AG04450 (cell line): ENCODE measurements at regions of chr10 and their contacts with region 1.

Region 1: DNA sequence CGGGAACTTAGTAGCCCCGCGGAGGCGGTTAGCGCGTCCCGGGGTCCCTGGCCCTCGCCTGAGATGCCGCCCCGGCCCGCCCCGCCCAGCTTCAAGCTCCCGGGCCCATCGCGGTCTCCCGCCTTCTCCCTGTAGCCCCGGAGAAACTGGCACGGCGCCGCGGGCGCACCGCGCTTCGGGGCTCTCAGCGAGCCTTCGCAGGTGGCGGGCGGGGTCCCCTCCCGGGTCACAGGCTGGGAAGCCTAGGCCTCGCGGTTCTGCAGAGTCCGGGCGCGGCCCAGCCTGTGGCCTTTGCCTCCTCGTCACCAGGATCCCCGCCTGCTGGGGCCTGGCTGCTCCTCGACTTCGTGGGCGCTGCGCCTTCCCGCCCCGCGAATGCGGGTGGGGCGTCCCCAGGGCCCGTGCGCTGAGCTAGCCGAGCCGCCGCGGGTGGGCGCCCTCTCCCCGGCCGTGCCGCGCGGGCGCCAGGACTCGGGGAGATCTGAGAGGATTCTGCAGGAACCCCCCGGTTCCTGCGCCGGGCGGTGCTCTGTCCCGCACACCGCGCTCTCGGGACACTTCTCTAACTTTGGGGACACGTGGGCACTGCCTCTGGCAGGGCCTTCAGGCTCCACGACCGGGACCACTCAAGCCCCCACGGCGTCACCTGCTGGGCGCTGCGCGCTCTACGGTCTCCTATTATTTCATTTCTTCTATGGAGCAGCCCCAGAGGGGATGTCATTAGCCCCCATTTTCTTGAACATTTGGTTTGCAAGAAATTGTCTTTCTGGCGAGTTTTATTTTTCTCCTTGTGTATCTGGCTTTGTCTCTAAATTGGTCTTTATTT is 682 bp upstream of the RGS10 start:
- DNase-seq: no peak
- H3K4me3 ChIP-seq: peak overlapping the region; percentile 80
- H3K27ac ChIP-seq: peak overlapping the region; percentile 11
- H3K27me3 ChIP-seq: peaks cover 1% of the 10 kb centered on the region
- CTCF ChIP-seq: peak; percentile 61

Region 2: DNA sequence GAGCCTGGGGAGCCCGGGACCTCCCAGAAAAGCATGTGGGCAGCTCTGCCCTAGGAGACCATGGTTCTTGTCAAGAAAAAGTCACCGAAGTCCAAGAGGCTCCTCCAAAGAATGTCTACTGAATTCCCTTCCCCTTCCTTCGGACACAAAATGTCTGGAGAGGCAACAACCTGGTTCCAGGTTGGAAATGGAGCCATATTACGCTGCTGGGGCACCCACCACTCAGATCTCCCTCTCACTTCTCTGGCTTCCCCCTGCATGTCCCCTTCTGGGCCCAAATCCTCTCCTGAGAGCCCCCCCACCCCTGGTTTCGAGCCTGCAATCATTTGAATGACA is 53.2 kb before region 1 on chr10:
- CTCF ChIA-PET with region 1: interaction called, 11 read pairs
- POLR2A ChIA-PET with region 1: no interaction called
- DNase-seq: no peak
- H3K4me3 ChIP-seq: no peak overlapping the region
- H3K27ac ChIP-seq: no peak overlapping the region
- H3K27me3 ChIP-seq: no peaks in the 10 kb centered on the region
- CTCF ChIP-seq: no peak

Region 3: DNA sequence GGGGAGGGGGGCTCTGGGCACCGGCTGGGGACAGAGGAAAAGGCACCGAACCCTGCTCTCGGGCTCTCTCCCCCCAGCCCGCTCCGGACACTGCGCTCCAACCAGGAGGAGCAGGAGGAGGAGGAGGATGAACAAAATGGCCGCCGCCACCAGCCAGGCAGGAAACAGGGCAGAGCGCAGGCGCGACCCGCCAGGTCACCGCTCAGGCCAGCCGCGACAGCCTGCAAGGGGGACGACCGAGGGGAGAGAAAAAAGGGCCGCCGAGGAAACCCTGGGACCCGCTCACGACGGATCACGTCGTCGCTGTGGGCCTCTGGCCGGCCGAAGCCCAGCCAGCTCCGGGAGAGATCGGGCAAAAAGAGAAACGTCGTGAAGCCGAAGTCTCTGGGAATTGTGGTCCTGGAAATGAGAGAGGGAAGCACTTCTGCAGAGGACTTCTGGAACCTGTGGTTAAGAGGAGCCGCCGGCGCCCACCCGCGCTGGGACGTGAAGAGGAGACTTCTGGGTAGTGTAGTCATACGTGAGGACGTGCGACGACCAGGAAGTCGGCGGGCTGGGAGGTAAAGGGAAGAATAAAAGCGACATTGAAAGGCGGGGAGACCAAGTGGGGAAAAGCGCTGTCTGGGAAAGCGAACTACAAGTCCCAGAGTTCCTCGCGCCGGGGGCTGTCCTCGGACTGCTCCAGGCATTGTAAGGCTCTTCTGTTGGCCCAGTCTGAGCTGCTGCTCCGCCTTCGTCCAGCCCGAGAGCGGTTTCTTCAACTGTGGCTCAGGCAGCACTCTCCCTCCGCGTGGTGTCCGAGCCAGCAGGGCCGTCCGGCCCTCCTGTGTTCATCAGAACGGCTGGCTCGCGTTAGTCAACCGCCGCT is 53.6 kb after region 1 on chr10 and contains the start of gene TIAL1:
- CTCF ChIA-PET with region 1: interaction called, 21 read pairs
- POLR2A ChIA-PET with region 1: interaction called, 3 read pairs
- DNase-seq: peak; percentile 99
- H3K4me3 ChIP-seq: peak within 1 kb of the TSS; percentile 97
- H3K27ac ChIP-seq: peak within 1 kb of the TSS; percentile 99
- H3K27me3 ChIP-seq: no peaks in the 10 kb centered on the region
- CTCF ChIP-seq: no peak
- polyA plus RNA-seq, gene TIAL1: 86.0 and 113 TPM in 2 replicates